BJ (cell line): ENCODE measurements at regions of chr11 and their contacts with region 1.

Region 1: DNA sequence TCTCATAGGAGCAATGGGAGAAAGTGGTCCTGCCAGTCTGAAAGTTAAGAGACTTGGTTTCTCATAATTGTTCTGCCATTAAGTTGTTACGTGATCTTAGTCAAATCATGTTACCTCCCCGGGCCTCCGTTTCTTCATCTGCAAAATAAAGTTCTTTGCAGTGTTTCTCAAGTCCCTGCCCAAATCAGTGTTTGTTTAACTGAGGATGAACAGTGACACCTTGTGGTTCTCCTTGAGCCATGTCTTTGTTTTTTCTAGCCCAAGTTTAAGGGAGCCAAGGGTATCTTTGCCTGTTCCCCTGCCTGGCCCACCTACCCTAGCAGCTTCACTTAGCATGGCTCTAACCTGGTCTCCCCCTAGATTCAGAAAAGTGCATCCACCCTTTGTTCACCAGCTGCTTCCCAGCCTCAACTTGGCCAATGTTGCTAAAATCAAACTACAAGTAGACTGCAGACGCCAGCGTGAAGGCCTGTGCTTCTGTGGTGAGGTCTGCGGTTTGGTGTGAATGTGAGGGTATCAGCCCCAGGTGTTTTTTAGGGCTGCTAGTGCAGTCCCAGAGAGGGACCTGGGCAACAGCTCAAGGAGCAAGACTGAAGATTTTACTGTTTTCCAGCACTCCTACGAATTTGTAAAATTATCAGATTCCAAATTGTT is 35.5 kb downstream of the FZD4 start:
- DNase-seq: no peak
- H3K4me3 ChIP-seq: no peak overlapping the region
- H3K27me3 ChIP-seq: no peaks in the 10 kb centered on the region
- CTCF ChIP-seq: peak; percentile 73

Region 2: GRCh38 chr11:86869966-86870570 is 49.6 kb before region 1 on chr11:
- CTCF ChIA-PET with region 1: interaction called, 206 read pairs
- POLR2A ChIA-PET with region 1: no interaction called
- DNase-seq: no peak
- H3K4me3 ChIP-seq: no peak overlapping the region
- H3K27me3 ChIP-seq: no peaks in the 10 kb centered on the region
- CTCF ChIP-seq: peak; percentile 82

Region 3: GRCh38 chr11:88337181-88337986 is 1417.7 kb after region 1 on chr11 and contains the start of gene CTSC:
- CTCF ChIA-PET with region 1: no interaction called
- POLR2A ChIA-PET with region 1: interaction called, 10 read pairs
- DNase-seq: no peak
- H3K4me3 ChIP-seq: peak within 1 kb of the TSS; percentile 97
- H3K27me3 ChIP-seq: no peaks in the 10 kb centered on the region
- CTCF ChIP-seq: 0 out of 2 replicates have a peak, but pooled peaks have one; percentile 10
- polyA plus RNA-seq, gene CTSC: 175 and 224 TPM in 2 replicates